CD4-positive, alpha-beta T cell (primary cell): ENCODE measurements at regions of chr5 and their contacts with region 1.

Region 1: DNA sequence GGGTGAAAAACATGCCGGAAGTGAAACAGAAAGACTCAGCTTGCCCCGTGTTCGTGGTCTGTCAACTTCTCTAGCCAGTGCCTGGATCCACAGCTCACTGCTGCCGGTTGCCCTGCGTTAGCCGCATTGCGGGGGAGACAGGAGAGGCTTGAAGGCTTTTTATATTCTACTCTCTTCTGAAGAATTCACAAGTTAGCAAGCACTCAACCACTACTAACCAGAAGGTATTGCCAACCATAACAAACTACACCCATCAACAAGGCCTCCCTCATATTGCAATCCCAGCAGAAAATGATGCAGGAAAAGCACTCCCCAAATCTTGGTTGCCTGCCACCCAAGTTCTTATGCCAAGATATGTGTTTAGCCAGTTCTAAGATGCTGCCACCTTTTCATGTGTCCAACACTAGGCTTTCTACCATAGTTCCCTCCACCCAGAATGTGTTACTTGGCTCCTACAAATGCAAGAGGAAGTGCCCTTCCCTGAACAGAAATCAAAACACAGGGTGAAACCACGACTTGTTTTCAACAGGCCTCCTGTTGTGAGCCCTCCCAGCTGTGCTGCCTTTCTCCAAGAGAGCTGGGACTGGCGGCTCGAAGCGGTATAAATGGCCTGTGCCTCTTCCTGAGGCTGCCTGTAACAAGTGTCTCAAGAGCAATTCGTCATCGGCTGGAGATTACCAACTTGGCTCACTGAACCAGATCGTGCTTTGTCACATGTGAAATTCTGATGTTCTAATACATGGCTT is 129.0 kb downstream of the SNX18 start:
- DNase-seq: peak; percentile 18 to 85 (median 52)
- ATAC-seq: peak; percentile 85
- H3K4me3 ChIP-seq: peak overlapping the region; percentile 13
- H3K4me3 Mint-ChIP-seq: peak overlapping the region; percentile 80
- H3K27ac ChIP-seq: peak overlapping the region; percentile 56 to 70
- H3K27ac Mint-ChIP-seq: peak overlapping the region; percentile 97
- H3K4me1 ChIP-seq: peaks cover 43% of the 10 kb centered on the region
- H3K4me1 Mint-ChIP-seq: peaks cover 58% of the 10 kb centered on the region
- H3K27me3 ChIP-seq: no peaks in the 10 kb centered on the region
- H3K27me3 Mint-ChIP-seq: no peaks in the 10 kb centered on the region
- CTCF ChIP-seq: no peak

Region 2: GRCh38 chr5:54610197-54610944 is 36.2 kb before region 1 on chr5:
- CTCF ChIA-PET with region 1: no interaction called
- POLR2A ChIA-PET with region 1: interaction called, 26 read pairs
- intact Hi-C with region 1: no loop called
- DNase-seq: peak in 5 of 14 experiments; percentile 5 to 78 (median 55)
- ATAC-seq: peak; percentile 85
- H3K4me3 ChIP-seq: no peak overlapping the region
- H3K4me3 Mint-ChIP-seq: peak overlapping the region; percentile 35
- H3K27ac ChIP-seq: peak overlapping the region in 1 of 2 donors; percentile 49
- H3K27ac Mint-ChIP-seq: peak overlapping the region; percentile 72
- H3K4me1 ChIP-seq: peaks cover 21% of the 10 kb centered on the region
- H3K4me1 Mint-ChIP-seq: peaks cover 31% of the 10 kb centered on the region
- H3K27me3 ChIP-seq: no peaks in the 10 kb centered on the region
- H3K27me3 Mint-ChIP-seq: no peaks in the 10 kb centered on the region
- CTCF ChIP-seq: no peak

Region 3: GRCh38 chr5:54616031-54616430 is 30.5 kb before region 1 on chr5:
- CTCF ChIA-PET with region 1: no interaction called
- POLR2A ChIA-PET with region 1: interaction called, 26 read pairs
- intact Hi-C with region 1: no loop called
- DNase-seq: peak in 1 of 14 experiments; percentile 29
- ATAC-seq: no peak
- H3K4me3 ChIP-seq: no peak overlapping the region
- H3K4me3 Mint-ChIP-seq: no peak overlapping the region
- H3K27ac ChIP-seq: no peak overlapping the region
- H3K27ac Mint-ChIP-seq: no peak overlapping the region
- H3K4me1 ChIP-seq: peaks cover 12% of the 10 kb centered on the region
- H3K4me1 Mint-ChIP-seq: peaks cover 28% of the 10 kb centered on the region
- H3K27me3 ChIP-seq: no peaks in the 10 kb centered on the region
- H3K27me3 Mint-ChIP-seq: no peaks in the 10 kb centered on the region
- CTCF ChIP-seq: no peak

Region 4: GRCh38 chr5:54673523-54674225 is 27.1 kb after region 1 on chr5:
- CTCF ChIA-PET with region 1: no interaction called
- POLR2A ChIA-PET with region 1: interaction called, 15 read pairs
- intact Hi-C with region 1: no loop called
- DNase-seq: peak in 12 of 14 experiments; percentile 5 to 81 (median 40)
- ATAC-seq: peak; percentile 90
- H3K4me3 ChIP-seq: no peak overlapping the region
- H3K4me3 Mint-ChIP-seq: peak overlapping the region; percentile 2
- H3K27ac ChIP-seq: no peak overlapping the region
- H3K27ac Mint-ChIP-seq: peak overlapping the region; percentile 70
- H3K4me1 ChIP-seq: peaks cover 31% of the 10 kb centered on the region
- H3K4me1 Mint-ChIP-seq: peaks cover 57% of the 10 kb centered on the region
- H3K27me3 ChIP-seq: no peaks in the 10 kb centered on the region
- H3K27me3 Mint-ChIP-seq: no peaks in the 10 kb centered on the region
- CTCF ChIP-seq: no peak

Region 5: GRCh38 chr5:54743997-54744788 is 97.7 kb after region 1 on chr5:
- CTCF ChIA-PET with region 1: no interaction called
- POLR2A ChIA-PET with region 1: interaction called, 20 read pairs
- intact Hi-C with region 1: no loop called
- DNase-seq: peak in 13 of 14 experiments; percentile 13 to 89 (median 39)
- ATAC-seq: peak; percentile 95
- H3K4me3 ChIP-seq: no peak overlapping the region
- H3K4me3 Mint-ChIP-seq: peak overlapping the region; percentile 16
- H3K27ac ChIP-seq: peak overlapping the region in 1 of 2 donors; percentile 18
- H3K27ac Mint-ChIP-seq: peak overlapping the region; percentile 67
- H3K4me1 ChIP-seq: peaks cover 30% of the 10 kb centered on the region
- H3K4me1 Mint-ChIP-seq: peaks cover 19% of the 10 kb centered on the region
- H3K27me3 ChIP-seq: no peaks in the 10 kb centered on the region
- H3K27me3 Mint-ChIP-seq: no peaks in the 10 kb centered on the region
- CTCF ChIP-seq: no peak